CD4-positive, alpha-beta memory T cell (primary cell): ENCODE measurements at regions of chr11 and their contacts with region 1.

Region 1: DNA sequence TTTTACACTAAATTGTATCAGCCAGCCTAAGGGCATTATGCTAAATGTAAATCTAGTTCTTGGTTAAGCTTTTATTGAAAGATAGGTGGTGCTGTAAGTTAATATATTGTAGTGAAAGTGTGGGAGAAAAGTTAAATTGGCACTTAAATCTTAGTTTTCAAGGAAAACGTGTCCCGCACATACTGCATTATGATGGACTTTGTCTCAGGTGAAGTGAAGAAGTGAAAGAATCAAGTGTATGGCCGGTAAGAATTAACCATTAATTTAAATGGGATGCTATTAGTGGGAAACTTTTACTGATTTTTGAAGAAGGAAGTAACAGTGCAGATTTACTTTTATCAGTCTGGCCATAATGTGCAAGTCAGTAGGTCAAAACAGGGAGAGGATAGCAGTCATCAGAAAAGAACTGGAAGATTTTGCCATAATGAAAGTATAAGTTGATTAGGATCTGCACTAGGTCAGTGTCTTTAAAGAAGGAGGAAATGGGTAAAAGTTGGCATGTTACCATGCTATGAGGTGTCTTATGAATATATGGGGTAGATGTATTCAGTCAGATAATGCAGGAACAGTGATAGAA is 81.6 kb downstream of the PDHX start:
- DNase-seq: peak in 4 of 5 donors; percentile 37 to 48 (median 44)
- H3K4me3 ChIP-seq: no peak overlapping the region
- H3K4me3 Mint-ChIP-seq: peak overlapping the region in 6 of 8 donors; percentile 62 to 78 (median 75)
- H3K27ac ChIP-seq: peak overlapping the region; percentile 45
- H3K27ac Mint-ChIP-seq: peak overlapping the region; percentile 57 to 95 (median 86)
- H3K4me1 ChIP-seq: peaks cover 24% of the 10 kb centered on the region
- H3K4me1 Mint-ChIP-seq: peaks cover 20 to 34% (median 24%) of the 10 kb centered on the region in 4 donors
- H3K27me3 ChIP-seq: no peaks in the 10 kb centered on the region
- H3K27me3 Mint-ChIP-seq: no peaks in the 10 kb centered on the region

Region 2: GRCh38 chr11:33128739-33129138 is 1869.3 kb before region 1 on chr11:
- CTCF ChIA-PET with region 1: no interaction called
- POLR2A ChIA-PET with region 1: no interaction called
- intact Hi-C with region 1: no loop called
- DNase-seq: no peak
- H3K4me3 ChIP-seq: no peak overlapping the region
- H3K4me3 Mint-ChIP-seq: no peak overlapping the region
- H3K27ac ChIP-seq: no peak overlapping the region
- H3K27ac Mint-ChIP-seq: peak overlapping the region in 2 of 7 donors; percentile 32 to 64
- H3K4me1 ChIP-seq: peaks cover 13% of the 10 kb centered on the region
- H3K4me1 Mint-ChIP-seq: peaks cover 0 to 9% (median 4%) of the 10 kb centered on the region in 4 donors
- H3K27me3 ChIP-seq: no peaks in the 10 kb centered on the region
- H3K27me3 Mint-ChIP-seq: no peaks in the 10 kb centered on the region

Region 3: DNA sequence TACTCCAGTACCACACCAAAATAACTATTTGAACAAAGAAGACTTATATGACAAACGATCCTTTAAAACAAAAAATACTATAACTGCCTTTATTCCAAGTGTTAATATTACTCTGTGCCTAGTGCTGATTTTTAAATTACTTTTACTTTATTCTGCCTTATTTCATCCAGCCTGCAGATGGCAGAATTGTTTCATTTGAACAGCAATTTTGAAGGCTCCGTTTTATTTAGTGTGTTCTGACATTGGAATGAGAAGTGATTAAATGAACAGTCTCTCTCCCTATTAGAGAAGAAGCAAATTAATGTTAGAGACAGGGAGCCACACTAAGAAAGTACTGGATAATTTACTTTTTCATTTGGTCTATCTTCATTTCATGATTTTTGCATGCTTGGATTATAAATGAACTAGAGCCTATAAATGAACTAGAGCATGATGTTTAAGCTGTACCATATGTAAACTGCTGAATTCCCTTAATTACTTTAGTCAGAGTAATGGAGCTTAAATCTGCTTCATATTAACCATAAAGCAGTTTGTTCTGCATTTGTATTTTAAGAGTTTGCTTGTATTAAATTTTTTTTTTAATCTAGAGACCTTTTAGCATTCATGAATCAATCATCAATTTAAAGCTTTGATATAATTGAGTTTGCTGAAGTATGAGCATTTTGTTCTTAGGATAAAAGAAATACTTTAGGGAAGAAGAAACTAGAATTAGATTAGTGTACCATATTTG is 71.8 kb before region 1 on chr11:
- CTCF ChIA-PET with region 1: interaction called, 3 read pairs
- POLR2A ChIA-PET with region 1: no interaction called
- intact Hi-C with region 1: loop called (anchors 2 kb)
- DNase-seq: peak in 4 of 5 donors; percentile 49 to 57 (median 54)
- H3K4me3 ChIP-seq: no peak overlapping the region
- H3K4me3 Mint-ChIP-seq: no peak overlapping the region
- H3K27ac ChIP-seq: no peak overlapping the region
- H3K27ac Mint-ChIP-seq: peak overlapping the region in 1 of 7 donors; percentile 78
- H3K4me1 ChIP-seq: no peaks in the 10 kb centered on the region
- H3K4me1 Mint-ChIP-seq: peaks cover 8 to 25% (median 15%) of the 10 kb centered on the region in 4 donors
- H3K27me3 ChIP-seq: no peaks in the 10 kb centered on the region
- H3K27me3 Mint-ChIP-seq: no peaks in the 10 kb centered on the region

Region 4: DNA sequence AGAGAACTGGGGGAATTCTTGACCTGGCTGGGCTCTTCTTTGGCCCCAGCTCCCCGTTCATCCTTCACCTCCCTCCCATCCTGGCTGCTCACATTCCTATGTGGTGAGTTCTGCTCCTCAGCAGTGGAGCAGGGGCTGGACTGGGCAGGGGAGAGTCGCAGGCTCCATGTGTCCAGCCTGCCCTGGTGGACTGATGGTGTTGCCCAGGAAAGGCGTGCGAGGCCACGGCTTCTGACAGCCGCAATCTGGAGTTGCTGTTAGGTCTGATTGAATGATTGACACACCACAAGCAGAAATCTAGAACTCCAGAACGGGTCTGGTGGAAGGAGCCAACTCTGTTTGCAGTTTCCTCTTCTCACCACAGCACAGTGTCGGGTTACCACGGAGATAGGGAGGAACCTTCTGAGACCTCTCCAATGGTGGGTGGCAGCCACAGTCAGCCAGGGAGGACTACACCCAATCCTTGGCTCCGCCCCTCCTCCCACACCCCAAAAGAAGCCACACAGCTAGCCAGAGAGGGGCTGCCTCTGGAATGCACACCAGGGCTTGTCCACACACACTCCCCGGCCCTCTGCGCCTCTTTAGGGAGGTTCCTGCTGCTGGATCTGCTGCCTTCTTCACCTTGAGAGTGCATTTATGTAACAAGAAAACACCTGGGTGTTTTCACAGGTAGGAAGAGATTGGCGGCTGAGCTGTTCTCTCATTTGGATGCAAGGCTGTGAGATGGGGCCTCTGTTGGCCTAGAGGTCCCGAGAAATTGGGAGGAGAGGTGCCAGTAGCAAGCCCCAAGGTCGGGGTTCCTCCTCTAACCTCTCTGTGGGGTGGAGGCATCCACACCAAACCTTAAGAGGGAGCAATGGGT is 84.5 kb after region 1 on chr11:
- CTCF ChIA-PET with region 1: interaction called, 10 read pairs
- POLR2A ChIA-PET with region 1: interaction called, 9 read pairs
- intact Hi-C with region 1: loop called (anchors 1 kb)
- DNase-seq: peak; percentile 89 to 96 (median 93)
- H3K4me3 ChIP-seq: peak overlapping the region; percentile 50 to 57
- H3K4me3 Mint-ChIP-seq: peak overlapping the region; percentile 78 to 90 (median 84)
- H3K27ac ChIP-seq: peak overlapping the region; percentile 97
- H3K27ac Mint-ChIP-seq: peak overlapping the region; percentile 94 to 99 (median 98)
- H3K4me1 ChIP-seq: peaks cover 85% of the 10 kb centered on the region
- H3K4me1 Mint-ChIP-seq: peaks cover 73 to 100% (median 87%) of the 10 kb centered on the region in 4 donors
- H3K27me3 ChIP-seq: no peaks in the 10 kb centered on the region
- H3K27me3 Mint-ChIP-seq: no peaks in the 10 kb centered on the region

Region 5: GRCh38 chr11:35214792-35215193 is 216.8 kb after region 1 on chr11:
- CTCF ChIA-PET with region 1: interaction called, 3 read pairs
- POLR2A ChIA-PET with region 1: no interaction called
- intact Hi-C with region 1: loop called (anchors 1 kb)
- DNase-seq: peak in 1 of 5 donors; percentile 77
- H3K4me3 ChIP-seq: no peak overlapping the region
- H3K4me3 Mint-ChIP-seq: peak overlapping the region in 6 of 8 donors; percentile 7 to 76 (median 16)
- H3K27ac ChIP-seq: no peak overlapping the region
- H3K27ac Mint-ChIP-seq: peak overlapping the region; percentile 78 to 99 (median 91)
- H3K4me1 ChIP-seq: peaks cover 65% of the 10 kb centered on the region
- H3K4me1 Mint-ChIP-seq: peaks cover 57 to 92% (median 73%) of the 10 kb centered on the region in 4 donors
- H3K27me3 ChIP-seq: no peaks in the 10 kb centered on the region
- H3K27me3 Mint-ChIP-seq: no peaks in the 10 kb centered on the region